Tibial artery (tissue), 4 donors: ENCODE measurements at regions of chr22 and their contacts with region 1.

Region 1: DNA sequence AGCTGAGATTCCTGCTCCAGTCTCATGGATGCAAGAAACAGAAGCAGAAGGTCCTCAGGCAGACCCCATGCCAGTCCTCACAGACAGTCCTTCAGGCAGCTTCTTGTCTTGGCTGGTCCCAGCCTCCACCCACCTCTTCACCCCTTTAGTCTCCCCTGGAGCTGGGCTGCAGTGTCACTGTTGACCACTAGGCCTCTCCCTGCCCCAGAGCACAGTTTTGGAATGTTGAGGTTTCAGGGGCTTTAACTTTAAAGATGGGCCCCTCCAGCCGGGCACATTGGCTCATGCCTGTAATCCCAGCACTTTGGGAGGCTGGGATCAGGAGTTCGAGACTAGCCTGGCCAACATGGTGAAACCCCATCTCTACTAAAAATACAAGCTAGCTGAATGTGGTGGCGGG is 39.5 kb upstream of the GCAT start:
- DNase-seq: no peak
- H3K4me3 ChIP-seq: no peak overlapping the region
- H3K27ac ChIP-seq: no peak overlapping the region
- H3K4me1 ChIP-seq: no peaks in the 10 kb centered on the region
- H3K27me3 ChIP-seq: no peaks in the 10 kb centered on the region
- CTCF ChIP-seq: no peak

Region 2: DNA sequence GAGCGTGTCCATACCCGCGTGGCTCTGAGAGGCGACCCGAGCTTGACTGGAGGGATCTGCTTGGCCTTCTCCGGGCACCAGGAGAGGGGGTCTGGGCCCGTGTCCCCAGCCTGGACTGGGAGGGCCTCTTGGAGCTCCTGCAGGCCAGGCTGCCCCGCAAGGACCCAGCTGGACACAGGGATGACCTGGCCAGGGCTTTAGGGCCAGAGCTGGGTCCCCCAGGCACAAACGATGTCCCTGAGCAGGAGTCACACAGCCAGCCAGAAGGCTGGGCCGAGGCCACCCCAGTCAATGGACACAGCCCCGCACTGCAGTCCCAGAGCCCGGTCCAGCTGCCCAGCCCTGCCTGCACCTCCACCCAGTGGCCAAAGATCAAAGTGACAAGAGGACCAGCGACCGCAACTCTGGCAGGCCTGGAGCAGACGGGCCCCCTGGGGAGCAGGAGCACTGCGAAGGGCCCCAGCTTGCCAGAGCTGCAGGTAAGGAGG is 33.3 kb before region 1 on chr22:
- intact Hi-C with region 1: loop called (anchors 1 kb)
- DNase-seq: no peak
- H3K4me3 ChIP-seq: no peak overlapping the region
- H3K27ac ChIP-seq: no peak overlapping the region
- H3K4me1 ChIP-seq: no peaks in the 10 kb centered on the region
- H3K27me3 ChIP-seq: no peaks in the 10 kb centered on the region
- CTCF ChIP-seq: peak; percentile 19 to 27